ENCODE measurements at regions of chr12 and their contacts with region 1.

Region 1: DNA sequence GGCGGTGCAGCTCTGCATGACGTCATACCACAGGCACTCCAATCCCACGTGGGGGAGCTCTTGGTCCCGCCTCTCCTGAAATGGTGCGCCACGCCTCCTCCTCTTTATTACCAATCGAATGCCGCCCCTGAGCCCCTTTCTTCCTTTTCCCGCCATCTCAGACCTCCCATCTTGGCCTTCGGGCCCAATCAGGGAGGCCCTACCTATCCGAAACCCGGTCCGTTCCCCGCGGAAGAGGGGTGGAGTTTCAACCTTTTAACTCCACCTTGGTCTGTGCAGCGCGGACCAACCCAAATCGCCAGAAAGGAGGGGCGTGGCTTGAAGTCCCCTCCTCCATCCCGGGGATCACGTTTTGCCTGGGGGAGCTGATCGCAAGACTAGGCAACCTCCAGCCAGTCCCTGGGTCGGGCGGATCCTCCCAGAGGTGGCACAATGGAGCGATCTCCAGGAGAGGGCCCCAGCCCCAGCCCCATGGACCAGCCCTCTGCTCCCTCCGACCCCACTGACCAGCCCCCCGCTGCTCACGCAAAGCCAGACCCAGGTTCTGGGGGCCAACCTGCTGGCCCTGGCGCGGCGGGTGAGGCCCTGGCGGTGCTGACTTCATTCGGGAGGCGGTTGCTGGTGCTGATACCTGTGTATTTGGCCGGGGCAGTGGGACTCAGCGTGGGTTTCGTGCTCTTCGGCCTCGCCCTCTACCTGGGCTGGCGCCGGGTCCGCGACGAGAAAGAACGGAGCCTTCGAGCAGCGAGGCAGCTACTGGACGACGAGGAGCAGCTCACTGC is at the start of gene ESYT1:
- DNase-seq: peak; percentile 96 to 100 (median 99)
- H3K4me3 ChIP-seq: peak within 1 kb of the TSS; percentile 81 to 96
- H3K4me3 Mint-ChIP-seq: peak within 1 kb of the TSS; percentile 96 to 100 (median 98)
- H3K27ac ChIP-seq: peak within 1 kb of the TSS; percentile 82
- H3K27ac Mint-ChIP-seq: peak within 1 kb of the TSS; percentile 89 to 99 (median 98)
- H3K4me1 ChIP-seq: peaks cover 69% of the 10 kb centered on the region
- H3K4me1 Mint-ChIP-seq: peaks cover 46 to 84% (median 59%) of the 10 kb centered on the region in 4 donors
- H3K27me3 ChIP-seq: no peaks in the 10 kb centered on the region
- H3K27me3 Mint-ChIP-seq: no peaks in the 10 kb centered on the region
- total RNA-seq, gene ESYT1: 249 to 258 TPM

Region 2: GRCh38 chr12:56041552-56042429 is 86.3 kb before region 1 on chr12 and contains the start of gene RPS26:
- CTCF ChIA-PET with region 1: no interaction called
- POLR2A ChIA-PET with region 1: interaction called, 15 read pairs
- intact Hi-C with region 1: no loop called
- DNase-seq: peak; percentile 95 to 98 (median 96)
- H3K4me3 ChIP-seq: peak within 1 kb of the TSS; percentile 94 to 97
- H3K4me3 Mint-ChIP-seq: peak within 1 kb of the TSS; percentile 98 to 100 (median 99)
- H3K27ac ChIP-seq: peak within 1 kb of the TSS; percentile 87
- H3K27ac Mint-ChIP-seq: peak within 1 kb of the TSS; percentile 96 to 100 (median 99)
- H3K4me1 ChIP-seq: peaks cover 23% of the 10 kb centered on the region
- H3K4me1 Mint-ChIP-seq: peaks cover 15 to 45% (median 23%) of the 10 kb centered on the region in 4 donors
- H3K27me3 ChIP-seq: no peaks in the 10 kb centered on the region
- H3K27me3 Mint-ChIP-seq: no peaks in the 10 kb centered on the region
- total RNA-seq, gene RPS26: 55.6 to 55.8 TPM

Region 3: GRCh38 chr12:56152318-56153033 is 24.4 kb after region 1 on chr12 and contains the start of gene MYL6B:
- CTCF ChIA-PET with region 1: interaction called, 22 read pairs
- POLR2A ChIA-PET with region 1: interaction called, 236 read pairs
- intact Hi-C with region 1: loop called (anchors 1 kb)
- DNase-seq: peak; percentile 87 to 94 (median 88)
- H3K4me3 ChIP-seq: peak within 1 kb of the TSS; percentile 66 to 91
- H3K4me3 Mint-ChIP-seq: peak within 1 kb of the TSS; percentile 91 to 96 (median 94)
- H3K27ac ChIP-seq: peak within 1 kb of the TSS; percentile 84
- H3K27ac Mint-ChIP-seq: peak within 1 kb of the TSS; percentile 93 to 99 (median 97)
- H3K4me1 ChIP-seq: peaks cover 35% of the 10 kb centered on the region
- H3K4me1 Mint-ChIP-seq: peaks cover 16 to 49% (median 28%) of the 10 kb centered on the region in 4 donors
- H3K27me3 ChIP-seq: no peaks in the 10 kb centered on the region
- H3K27me3 Mint-ChIP-seq: no peaks in the 10 kb centered on the region
- total RNA-seq, gene MYL6B: 2.6 to 3.4 TPM

Region 4: DNA sequence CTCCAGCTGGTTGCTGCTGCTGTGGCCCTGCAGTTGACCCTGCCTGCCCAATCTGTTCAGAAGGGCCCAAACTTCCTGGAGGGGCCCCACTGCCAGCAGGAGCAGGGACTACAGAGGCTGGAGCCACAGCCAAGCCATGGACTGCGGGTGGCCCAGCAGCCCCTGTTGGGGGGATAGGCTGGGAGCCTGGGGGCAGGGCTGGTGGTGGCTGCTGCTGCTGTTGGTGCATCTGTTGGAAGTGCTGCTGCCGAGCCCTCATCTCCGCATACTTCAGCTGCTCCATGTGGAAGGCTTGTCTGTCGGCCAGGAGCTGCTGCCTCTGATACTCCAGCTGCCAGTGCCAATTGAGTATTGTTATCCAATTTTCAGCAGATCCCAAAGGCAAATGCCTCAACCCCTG is 37.3 kb after region 1 on chr12:
- CTCF ChIA-PET with region 1: interaction called, 12 read pairs
- POLR2A ChIA-PET with region 1: interaction called, 236 read pairs
- intact Hi-C with region 1: no loop called
- DNase-seq: no peak
- H3K4me3 ChIP-seq: no peak overlapping the region
- H3K4me3 Mint-ChIP-seq: no peak overlapping the region
- H3K27ac ChIP-seq: no peak overlapping the region
- H3K27ac Mint-ChIP-seq: peak overlapping the region in 6 of 7 donors; percentile 6 to 86 (median 64)
- H3K4me1 ChIP-seq: peaks cover 16% of the 10 kb centered on the region
- H3K4me1 Mint-ChIP-seq: peaks cover 9 to 30% (median 16%) of the 10 kb centered on the region in 4 donors
- H3K27me3 ChIP-seq: no peaks in the 10 kb centered on the region
- H3K27me3 Mint-ChIP-seq: no peaks in the 10 kb centered on the region

Region 5: DNA sequence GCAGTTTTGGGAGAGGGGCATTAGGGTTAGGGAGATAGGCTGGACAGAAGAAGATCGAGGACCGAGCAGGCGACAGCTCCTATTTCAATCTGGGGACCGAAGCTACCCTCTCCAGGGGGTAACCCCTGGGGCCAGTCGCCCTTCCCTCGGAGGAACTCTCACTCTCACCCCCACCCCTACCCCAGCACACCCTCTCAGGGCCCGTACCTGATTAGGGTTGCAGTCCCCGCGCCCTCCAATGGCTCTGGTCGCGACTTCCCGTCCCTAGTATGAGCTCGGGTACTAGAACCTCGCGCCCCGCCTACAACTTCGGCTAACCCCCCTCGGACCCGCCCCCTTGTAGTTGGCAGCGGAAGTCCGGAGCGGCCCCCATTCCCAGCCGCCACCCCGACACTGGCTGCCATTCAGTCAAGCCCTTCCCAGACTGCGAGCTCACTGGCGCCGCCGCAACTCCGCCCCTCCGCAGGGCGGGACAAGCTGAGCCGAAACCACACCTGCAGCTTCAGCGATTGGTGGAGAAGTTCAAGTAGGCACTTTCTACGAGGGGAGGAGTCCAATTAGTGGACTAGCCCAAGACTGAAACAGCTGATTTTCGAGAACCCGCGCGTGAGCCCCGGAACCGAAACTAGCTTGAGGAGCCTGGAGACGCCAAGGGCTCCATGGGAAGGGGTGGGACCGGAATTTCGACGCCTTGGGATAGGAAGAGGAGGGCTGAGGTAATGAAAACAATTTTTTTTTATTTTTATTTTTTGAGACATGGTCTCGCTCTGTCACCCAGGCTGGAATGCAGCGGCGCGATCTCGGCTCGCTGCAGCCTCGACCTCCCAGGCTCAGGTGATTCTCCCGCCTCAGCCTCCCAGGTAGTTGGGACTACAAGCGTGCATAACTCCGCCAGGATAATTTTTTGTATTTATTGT is 232.0 kb after region 1 on chr12 and contains the start of gene STAT2:
- CTCF ChIA-PET with region 1: no interaction called
- POLR2A ChIA-PET with region 1: interaction called, 5 read pairs
- intact Hi-C with region 1: loop called (anchors 5 kb)
- DNase-seq: peak; percentile 99 to 100 (median 100)
- H3K4me3 ChIP-seq: peak within 1 kb of the TSS; percentile 78 to 97
- H3K4me3 Mint-ChIP-seq: peak within 1 kb of the TSS; percentile 92 to 98 (median 96)
- H3K27ac ChIP-seq: peak within 1 kb of the TSS; percentile 84
- H3K27ac Mint-ChIP-seq: peak within 1 kb of the TSS; percentile 89 to 98 (median 96)
- H3K4me1 ChIP-seq: peaks cover 29% of the 10 kb centered on the region
- H3K4me1 Mint-ChIP-seq: peaks cover 16 to 30% (median 21%) of the 10 kb centered on the region in 4 donors
- H3K27me3 ChIP-seq: no peaks in the 10 kb centered on the region
- H3K27me3 Mint-ChIP-seq: no peaks in the 10 kb centered on the region
- total RNA-seq, gene STAT2: 192 to 193 TPM

Measured in CD4-positive, alpha-beta memory T cell (primary cell).